ENCODE measurements at regions of chr4 and their contacts with region 1.

Region 1: GRCh38 chr4:88779431-88779830 is 81.8 kb upstream of the NAP1L5 start:
- DNase-seq: no peak
- ATAC-seq: no peak
- H3K4me3 ChIP-seq: no peak overlapping the region
- H3K27ac ChIP-seq: no peak overlapping the region
- H3K4me1 ChIP-seq: no peaks in the 10 kb centered on the region
- H3K27me3 ChIP-seq: peaks cover 0 to 2% of the 10 kb centered on the region in 2 experiments; a peak in 1 of 4 replicates
- CTCF ChIP-seq: no peak
- EP300 ChIP-seq: no peak
- POLR2A ChIP-seq: no peak
- RAD21 ChIP-seq: no peak

Region 2: GRCh38 chr4:88732714-88733368 is 46.6 kb before region 1 on chr4:
- CTCF ChIA-PET with region 1: no interaction called
- POLR2A ChIA-PET with region 1: no interaction called
- RAD21 ChIA-PET with region 1: no interaction called
- SMC1A ChIA-PET with region 1: no interaction called
- in situ Hi-C with region 1: no loop called
- intact Hi-C with region 1: loop called (anchors 2 kb)
- DNase-seq: no peak
- ATAC-seq: no peak
- H3K4me3 ChIP-seq: no peak overlapping the region
- H3K27ac ChIP-seq: no peak overlapping the region
- H3K4me1 ChIP-seq: no peaks in the 10 kb centered on the region
- H3K27me3 ChIP-seq: no peaks in the 10 kb centered on the region
- CTCF ChIP-seq: no peak
- EP300 ChIP-seq: no peak
- POLR2A ChIP-seq: no peak
- RAD21 ChIP-seq: no peak

Region 3: GRCh38 chr4:88803600-88804096 is 24.2 kb after region 1 on chr4:
- CTCF ChIA-PET with region 1: no interaction called
- POLR2A ChIA-PET with region 1: no interaction called
- RAD21 ChIA-PET with region 1: no interaction called
- SMC1A ChIA-PET with region 1: no interaction called
- in situ Hi-C with region 1: no loop called
- intact Hi-C with region 1: no loop called
- DNase-seq: peak; percentile 69
- ATAC-seq: peak; percentile 81
- H3K4me3 ChIP-seq: no peak overlapping the region
- H3K27ac ChIP-seq: no peak overlapping the region
- H3K4me1 ChIP-seq: no peaks in the 10 kb centered on the region
- H3K27me3 ChIP-seq: no peaks in the 10 kb centered on the region
- CTCF ChIP-seq: no peak
- EP300 ChIP-seq: peak in 1 of 2 experiments; percentile 31; a peak in 1 of 4 replicates
- POLR2A ChIP-seq: no peak
- RAD21 ChIP-seq: no peak